ENCODE measurements at regions of chr3 and their contacts with region 1.

Region 1: DNA sequence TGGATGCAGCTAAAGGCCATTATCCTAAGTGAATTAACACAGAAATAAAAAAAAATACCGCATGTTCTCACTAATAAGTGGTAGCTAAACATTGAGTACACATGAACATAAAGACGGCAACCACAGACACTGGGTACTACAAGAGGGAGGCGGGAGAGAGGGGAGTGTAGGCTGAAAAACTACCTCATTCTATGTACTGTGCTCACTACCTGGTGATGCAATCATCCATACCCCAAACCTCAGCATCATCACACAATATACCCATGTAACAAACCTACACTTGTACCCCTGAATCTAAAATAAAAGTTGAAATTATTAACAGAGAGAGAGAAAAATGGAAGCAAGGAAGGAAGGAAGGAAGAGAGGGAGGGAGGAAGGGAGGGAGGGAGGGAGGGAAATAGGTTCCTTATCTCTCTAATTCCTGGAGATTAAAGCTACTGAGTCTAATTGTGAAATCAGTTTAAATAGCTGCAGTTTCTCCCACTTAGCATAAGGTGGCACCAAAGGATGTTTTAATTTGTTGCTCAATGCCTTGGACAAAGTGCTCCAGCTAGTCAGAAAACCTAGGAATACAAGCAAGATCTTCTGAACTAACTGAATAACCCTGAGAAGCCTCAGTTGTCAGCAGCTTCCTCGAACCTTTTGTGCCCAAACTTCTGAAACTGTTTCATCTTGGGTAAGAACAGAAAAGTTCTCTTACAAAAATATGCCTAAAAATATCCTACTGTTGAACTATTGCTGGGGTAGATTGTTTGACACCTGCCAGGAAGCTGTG is 79.4 kb upstream of the ATP11B start:
- DNase-seq: no peak
- H3K4me3 ChIP-seq: no peak overlapping the region
- H3K27ac ChIP-seq: no peak overlapping the region
- H3K4me1 ChIP-seq: no peaks in the 10 kb centered on the region
- H3K27me3 ChIP-seq: no peaks in the 10 kb centered on the region
- CTCF ChIP-seq: peak in 4 of 6 experiments; percentile 60 to 82 (median 64)
- POLR2A ChIP-seq: no peak

Region 2: DNA sequence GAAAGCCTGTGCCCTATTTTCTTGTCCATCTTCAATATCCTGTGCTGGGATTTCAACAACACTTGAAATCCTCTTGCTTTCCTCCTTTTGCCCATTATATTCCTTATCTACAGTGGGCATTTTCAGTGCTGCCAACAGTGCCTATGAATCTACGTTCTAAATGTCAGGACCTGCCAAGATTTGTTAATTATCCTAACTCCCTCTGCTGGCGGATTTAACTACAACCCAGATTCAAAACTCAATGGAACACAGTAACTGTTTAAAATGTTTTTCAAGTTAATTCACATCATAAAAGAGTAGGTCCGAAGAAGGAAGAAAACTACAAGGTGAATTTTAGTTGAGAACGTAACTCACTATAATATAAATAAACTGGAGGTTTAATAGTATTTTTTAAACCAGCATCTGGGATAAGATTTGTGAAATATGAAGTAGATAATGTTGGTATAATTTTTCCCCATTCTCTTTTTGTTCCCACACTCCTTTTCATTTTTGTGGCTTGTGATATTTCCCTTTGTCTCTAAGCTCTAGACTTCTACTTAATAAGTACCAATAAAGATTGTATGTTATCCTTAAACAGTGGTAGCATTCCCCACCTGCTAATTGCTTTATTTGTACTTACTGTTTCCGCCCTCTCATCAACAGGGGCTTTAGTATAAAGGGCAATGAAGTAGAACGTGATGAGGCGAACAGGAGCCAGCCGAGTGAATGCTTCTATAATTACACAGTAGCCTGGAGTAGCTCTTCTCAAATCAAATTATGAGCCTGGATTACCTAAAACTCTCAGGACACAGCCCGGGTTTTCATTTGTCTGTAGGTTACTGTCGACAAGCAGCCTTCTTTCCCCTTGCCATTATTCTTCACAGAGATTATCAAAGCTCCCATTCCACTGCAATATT is 223.1 kb before region 1 on chr3:
- intact Hi-C with region 1: no loop called
- DNase-seq: no peak
- H3K4me3 ChIP-seq: no peak overlapping the region
- H3K27ac ChIP-seq: no peak overlapping the region
- H3K4me1 ChIP-seq: peaks cover 3 to 7% of the 10 kb centered on the region in 2 donors
- H3K27me3 ChIP-seq: no peaks in the 10 kb centered on the region
- CTCF ChIP-seq: peak in 2 of 6 experiments; percentile 17 to 24
- POLR2A ChIP-seq: no peak

Region 3: GRCh38 chr3:182837855-182838454 is 124.0 kb after region 1 on chr3:
- intact Hi-C with region 1: loop called (anchors 5 kb)
- DNase-seq: no peak
- H3K4me3 ChIP-seq: no peak overlapping the region
- H3K27ac ChIP-seq: no peak overlapping the region
- H3K4me1 ChIP-seq: no peaks in the 10 kb centered on the region
- H3K27me3 ChIP-seq: no peaks in the 10 kb centered on the region
- CTCF ChIP-seq: peak in 3 of 6 experiments; percentile 33 to 44 (median 37)
- POLR2A ChIP-seq: no peak

Region 4: GRCh38 chr3:182848906-182849305 is 135.0 kb after region 1 on chr3:
- intact Hi-C with region 1: no loop called
- DNase-seq: no peak
- H3K4me3 ChIP-seq: no peak overlapping the region
- H3K27ac ChIP-seq: no peak overlapping the region
- H3K4me1 ChIP-seq: no peaks in the 10 kb centered on the region
- H3K27me3 ChIP-seq: no peaks in the 10 kb centered on the region
- CTCF ChIP-seq: no peak
- POLR2A ChIP-seq: no peak

Region 5: GRCh38 chr3:182989407-182989965 is 275.6 kb after region 1 on chr3:
- intact Hi-C with region 1: no loop called
- DNase-seq: peak; percentile 91 to 93
- H3K4me3 ChIP-seq: no peak overlapping the region
- H3K27ac ChIP-seq: no peak overlapping the region
- H3K4me1 ChIP-seq: peaks cover 0 to 3% of the 10 kb centered on the region in 2 donors
- H3K27me3 ChIP-seq: no peaks in the 10 kb centered on the region
- CTCF ChIP-seq: no peak
- POLR2A ChIP-seq: no peak

Measured in thyroid gland (tissue), 4 donors.